Right cardiac atrium (tissue), 5 donors: ENCODE measurements at regions of chr10 and their contacts with region 1.

Region 1: GRCh38 chr10:22573820-22574569 is 140.4 kb downstream of the PIP4K2A start:
- DNase-seq: no peak
- ATAC-seq: no peak
- H3K4me3 ChIP-seq: no peak overlapping the region
- H3K27ac ChIP-seq: no peak overlapping the region
- H3K4me1 ChIP-seq: no peaks in the 10 kb centered on the region
- H3K27me3 ChIP-seq: no peaks in the 10 kb centered on the region

Region 2: DNA sequence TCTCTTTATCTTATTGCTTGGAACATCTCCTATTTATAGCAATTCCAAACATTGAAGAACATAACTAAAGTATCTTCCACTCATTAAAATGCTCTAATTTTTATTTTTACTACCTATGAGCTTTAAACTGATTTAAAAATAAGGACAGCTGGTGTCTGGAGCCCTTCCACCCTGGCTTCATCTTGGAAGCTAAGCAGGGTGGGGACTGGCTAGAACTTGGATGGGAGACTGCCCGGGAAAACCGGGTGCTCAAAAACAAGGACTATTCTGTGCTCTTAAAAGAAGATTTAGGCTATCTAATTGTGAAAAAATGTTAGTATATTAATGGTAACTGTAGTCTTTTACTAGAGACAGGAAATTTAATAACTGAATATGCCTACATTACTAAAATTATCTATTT is 423.1 kb after region 1 on chr10:
- intact Hi-C with region 1: loop called in 1 of 4 experiments (anchors 10 kb)
- DNase-seq: no peak
- ATAC-seq: no peak
- H3K4me3 ChIP-seq: no peak overlapping the region
- H3K27ac ChIP-seq: no peak overlapping the region
- H3K4me1 ChIP-seq: no peaks in the 10 kb centered on the region
- H3K27me3 ChIP-seq: no peaks in the 10 kb centered on the region

Region 3: DNA sequence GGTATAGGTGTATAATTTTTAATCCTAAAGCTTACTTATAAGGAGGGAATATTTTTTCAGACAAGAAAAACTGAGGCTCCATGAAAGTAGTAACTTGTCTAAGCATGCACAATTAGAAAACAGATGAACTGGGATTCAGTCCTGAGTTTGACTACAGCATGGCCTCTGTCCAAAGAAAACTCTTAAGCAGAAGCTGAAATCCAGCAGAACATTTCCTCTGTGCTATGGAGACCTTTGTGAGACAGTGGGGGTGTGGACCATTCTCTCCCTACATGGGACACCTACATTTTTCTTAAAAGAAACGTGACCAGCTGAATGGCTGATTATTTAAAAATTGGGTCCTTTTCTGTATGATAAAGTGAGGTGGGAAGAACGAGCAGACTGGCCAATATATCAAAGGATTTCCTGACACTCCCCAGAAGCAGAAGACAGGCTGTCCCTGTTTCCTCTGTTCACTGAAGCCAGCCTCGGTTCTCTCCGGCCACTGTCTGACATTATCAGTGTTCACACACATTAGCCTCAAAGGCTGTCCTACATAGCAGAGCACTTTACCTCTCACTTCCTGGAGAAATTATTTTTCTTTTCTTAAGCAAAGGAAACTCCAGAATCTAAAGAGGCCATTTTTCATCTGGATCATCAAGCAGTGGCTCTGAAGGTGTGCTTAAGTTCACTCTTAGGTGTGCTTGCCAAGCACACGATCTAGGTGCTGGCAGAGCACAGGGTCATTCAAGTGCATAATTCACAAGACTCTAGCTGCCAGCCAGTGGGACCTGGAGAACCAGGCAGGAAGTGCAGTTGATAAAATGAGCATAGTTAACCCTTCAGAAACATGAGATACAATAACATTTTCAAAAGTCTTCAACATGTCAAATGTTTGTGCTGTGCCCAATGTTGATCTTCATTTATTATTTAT is 1594.5 kb after region 1 on chr10:
- intact Hi-C with region 1: no loop called
- DNase-seq: peak in 1 of 3 donors; percentile 60
- ATAC-seq: peak; percentile 87 to 90
- H3K4me3 ChIP-seq: no peak overlapping the region
- H3K27ac ChIP-seq: peak overlapping the region; percentile 48
- H3K4me1 ChIP-seq: peaks cover 2% of the 10 kb centered on the region
- H3K27me3 ChIP-seq: no peaks in the 10 kb centered on the region